Activated T-helper 1 cell treated with anti-CD3 and anti-CD28 coated beads, Interleukin-12 subunit alpha, Interleukin-12 subunit beta, Interleukin-2, Interleukin-4 antibody, amounts not matched to agents 30 ng/mL and 10 ng/mL and 1 ng/mL, durations not matched to agents 14 hours and 24 hours and 36 hours (primary cell): ENCODE measurements at regions of chr2 and their contacts with region 1.

Region 1: DNA sequence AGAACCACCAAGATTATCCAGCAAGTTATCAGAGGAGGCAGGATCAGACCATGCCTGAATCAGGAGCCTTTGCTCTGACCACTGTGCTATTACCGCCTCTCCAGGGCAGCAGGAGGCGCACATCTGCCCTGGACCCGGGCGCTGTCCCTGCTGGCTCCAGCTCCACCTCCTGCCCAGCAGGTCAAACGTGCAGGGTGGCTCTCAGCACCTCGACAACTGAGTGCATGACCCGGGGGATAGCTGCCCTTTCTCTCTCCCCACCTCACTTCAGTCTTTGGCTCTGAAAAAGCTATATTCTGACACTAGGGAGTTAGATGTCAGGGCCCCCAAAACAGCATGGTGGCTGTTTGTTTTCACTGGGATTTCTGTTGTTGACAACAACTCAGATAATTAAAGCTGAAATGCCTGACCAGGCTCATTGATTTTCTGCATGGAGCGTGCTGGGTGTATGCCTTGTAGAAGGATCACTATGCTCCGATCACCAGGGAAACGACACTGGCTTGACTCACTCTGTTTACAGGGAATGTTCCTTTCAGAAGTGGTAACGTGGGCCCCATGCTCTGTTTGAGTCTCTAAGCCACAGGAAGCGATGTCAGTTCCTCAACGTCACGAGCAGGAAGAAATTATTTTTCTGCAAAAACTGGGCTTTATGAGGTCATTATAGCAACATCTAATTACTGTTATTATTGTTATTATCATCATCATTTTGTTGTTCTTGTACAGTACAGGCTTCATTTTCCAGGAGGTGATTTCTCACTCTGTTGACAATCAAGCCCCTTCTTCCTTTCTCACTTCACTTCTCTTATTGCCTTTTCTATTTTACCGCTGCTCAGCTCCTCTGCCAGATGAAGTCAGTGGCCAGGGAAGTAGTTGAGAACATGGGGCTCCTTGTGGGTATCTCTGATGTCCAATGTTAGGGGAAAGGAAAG is 125.6 kb downstream of the PLB1 start:
- DNase-seq: peak; percentile 77
- H3K4me3 Mint-ChIP-seq: peak overlapping the region; percentile 67
- H3K27ac Mint-ChIP-seq: peak overlapping the region; percentile 96
- H3K4me1 Mint-ChIP-seq: peaks cover 5% of the 10 kb centered on the region
- H3K27me3 Mint-ChIP-seq: no peaks in the 10 kb centered on the region

Region 2: GRCh38 chr2:28469304-28469703 is 152.1 kb before region 1 on chr2:
- intact Hi-C with region 1: loop called (anchors 1 kb)
- DNase-seq: no peak
- H3K4me3 Mint-ChIP-seq: no peak overlapping the region
- H3K27ac Mint-ChIP-seq: no peak overlapping the region
- H3K4me1 Mint-ChIP-seq: peaks cover 44% of the 10 kb centered on the region
- H3K27me3 Mint-ChIP-seq: peaks cover 7% of the 10 kb centered on the region

Region 3: GRCh38 chr2:28488858-28489575 is 132.4 kb before region 1 on chr2:
- intact Hi-C with region 1: no loop called
- DNase-seq: no peak
- H3K4me3 Mint-ChIP-seq: no peak overlapping the region
- H3K27ac Mint-ChIP-seq: no peak overlapping the region
- H3K4me1 Mint-ChIP-seq: no peaks in the 10 kb centered on the region
- H3K27me3 Mint-ChIP-seq: peaks cover 2% of the 10 kb centered on the region

Region 4: GRCh38 chr2:28594289-28595108 is 26.9 kb before region 1 on chr2:
- intact Hi-C with region 1: loop called (anchors 1 kb)
- DNase-seq: peak; percentile 71
- H3K4me3 Mint-ChIP-seq: peak overlapping the region; percentile 49
- H3K27ac Mint-ChIP-seq: peak overlapping the region; percentile 78
- H3K4me1 Mint-ChIP-seq: peaks cover 30% of the 10 kb centered on the region
- H3K27me3 Mint-ChIP-seq: peaks cover 4% of the 10 kb centered on the region

Region 5: DNA sequence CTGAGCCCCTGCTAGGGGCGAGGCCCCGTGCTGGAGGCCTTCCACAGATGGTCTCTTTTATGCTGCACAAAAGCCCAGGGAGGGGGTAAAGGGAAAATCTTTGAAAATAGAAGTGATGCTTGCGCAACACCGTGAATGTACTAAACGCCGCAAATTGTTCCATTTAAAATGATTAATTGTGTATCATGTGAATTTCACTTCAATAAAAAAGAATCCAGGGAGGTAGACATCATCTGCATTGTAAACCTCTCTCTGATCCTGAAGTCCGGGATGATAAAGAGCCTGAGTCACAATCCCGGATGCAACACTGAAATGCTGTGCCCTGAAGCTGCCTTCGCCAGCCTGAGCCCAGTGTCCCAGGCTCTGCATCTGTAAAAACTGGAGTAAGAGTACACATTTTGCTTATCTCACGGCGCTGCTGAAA is 22.5 kb after region 1 on chr2:
- intact Hi-C with region 1: loop called (anchors 1 kb)
- DNase-seq: no peak
- H3K4me3 Mint-ChIP-seq: no peak overlapping the region
- H3K27ac Mint-ChIP-seq: no peak overlapping the region
- H3K4me1 Mint-ChIP-seq: peaks cover 26% of the 10 kb centered on the region
- H3K27me3 Mint-ChIP-seq: no peaks in the 10 kb centered on the region

Region 6: GRCh38 chr2:28681158-28681571 is 59.7 kb after region 1 on chr2:
- intact Hi-C with region 1: loop called (anchors 1 kb)
- DNase-seq: peak; percentile 67
- H3K4me3 Mint-ChIP-seq: peak overlapping the region; percentile 73
- H3K27ac Mint-ChIP-seq: peak overlapping the region; percentile 90
- H3K4me1 Mint-ChIP-seq: peaks cover 80% of the 10 kb centered on the region
- H3K27me3 Mint-ChIP-seq: no peaks in the 10 kb centered on the region

Region 7: GRCh38 chr2:29463181-29463900 is 841.9 kb after region 1 on chr2:
- intact Hi-C with region 1: no loop called
- DNase-seq: no peak
- H3K4me3 Mint-ChIP-seq: no peak overlapping the region
- H3K27ac Mint-ChIP-seq: no peak overlapping the region
- H3K4me1 Mint-ChIP-seq: no peaks in the 10 kb centered on the region
- H3K27me3 Mint-ChIP-seq: peaks cover 9% of the 10 kb centered on the region